Activated CD4-positive, alpha-beta memory T cell treated with anti-CD3 and anti-CD28 coated beads for 36 hours (primary cell): ENCODE measurements at regions of chr12 and their contacts with region 1.

Region 1: GRCh38 chr12:69157023-69157655 is 82.2 kb upstream of the CPSF6 start:
- DNase-seq: peak; percentile 95
- H3K4me3 Mint-ChIP-seq: peak overlapping the region; percentile 52
- H3K27ac Mint-ChIP-seq: no peak overlapping the region
- H3K4me1 Mint-ChIP-seq: peaks cover 39% of the 10 kb centered on the region
- H3K27me3 Mint-ChIP-seq: no peaks in the 10 kb centered on the region

Region 2: GRCh38 chr12:69059483-69060457 is 97.4 kb before region 1 on chr12:
- CTCF ChIA-PET with region 1: no interaction called
- POLR2A ChIA-PET with region 1: no interaction called
- intact Hi-C with region 1: loop called (anchors 5 kb)
- DNase-seq: peak; percentile 35
- H3K4me3 Mint-ChIP-seq: no peak overlapping the region
- H3K27ac Mint-ChIP-seq: peak overlapping the region; percentile 70
- H3K4me1 Mint-ChIP-seq: peaks cover 33% of the 10 kb centered on the region
- H3K27me3 Mint-ChIP-seq: no peaks in the 10 kb centered on the region

Region 3: GRCh38 chr12:69254046-69254445 is 96.9 kb after region 1 on chr12:
- CTCF ChIA-PET with region 1: interaction called, 178 read pairs
- POLR2A ChIA-PET with region 1: interaction called, 9 read pairs
- intact Hi-C with region 1: loop called (anchors 1 kb)
- DNase-seq: no peak
- H3K4me3 Mint-ChIP-seq: no peak overlapping the region
- H3K27ac Mint-ChIP-seq: peak overlapping the region; percentile 67
- H3K4me1 Mint-ChIP-seq: peaks cover 36% of the 10 kb centered on the region
- H3K27me3 Mint-ChIP-seq: no peaks in the 10 kb centered on the region

Region 4: DNA sequence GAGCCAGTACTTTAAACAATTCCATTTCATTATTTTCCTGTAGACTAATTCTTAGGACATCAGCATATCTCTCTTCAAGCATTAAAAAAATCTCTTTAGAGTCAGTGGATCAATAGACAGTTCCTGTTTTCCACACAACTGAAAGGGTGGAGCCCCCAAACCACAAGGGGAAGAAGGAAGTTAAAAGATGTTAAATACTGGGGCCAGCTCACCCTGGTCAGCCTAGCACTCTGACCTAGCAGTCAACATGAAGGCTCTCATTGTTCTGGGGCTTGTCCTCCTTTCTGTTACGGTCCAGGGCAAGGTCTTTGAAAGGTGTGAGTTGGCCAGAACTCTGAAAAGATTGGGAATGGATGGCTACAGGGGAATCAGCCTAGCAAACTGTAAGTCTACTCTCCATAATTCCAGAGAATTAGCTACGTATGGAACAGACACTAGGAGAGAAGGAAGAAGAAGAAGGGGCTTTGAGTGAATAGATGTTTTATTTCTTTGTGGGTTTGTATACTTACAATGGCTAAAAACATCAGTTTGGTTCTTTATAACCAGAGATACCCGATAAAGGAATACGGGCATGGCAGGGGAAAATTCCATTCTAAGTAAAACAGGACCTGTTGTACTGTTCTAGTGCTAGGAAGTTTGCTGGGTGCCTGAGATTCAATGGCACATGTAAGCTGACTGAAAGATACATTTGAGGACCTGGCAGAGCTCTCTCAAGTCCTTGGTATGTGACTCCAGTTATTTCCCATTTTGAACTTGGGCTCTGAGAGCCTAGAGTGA is 191.2 kb after region 1 on chr12 and contains the start of gene LYZ:
- CTCF ChIA-PET with region 1: no interaction called
- POLR2A ChIA-PET with region 1: no interaction called
- intact Hi-C with region 1: no loop called
- DNase-seq: no peak
- H3K4me3 Mint-ChIP-seq: no peak within 1 kb of the TSS
- H3K27ac Mint-ChIP-seq: no peak within 1 kb of the TSS
- H3K4me1 Mint-ChIP-seq: no peaks in the 10 kb centered on the region
- H3K27me3 Mint-ChIP-seq: no peaks in the 10 kb centered on the region
- total RNA-seq, gene LYZ: not detected

Region 5: GRCh38 chr12:69470189-69471075 is 313.3 kb after region 1 on chr12 and contains the start of gene FRS2:
- CTCF ChIA-PET with region 1: no interaction called
- POLR2A ChIA-PET with region 1: no interaction called
- intact Hi-C with region 1: loop called (anchors 5 kb)
- DNase-seq: peak; percentile 92
- H3K4me3 Mint-ChIP-seq: peak within 1 kb of the TSS; percentile 98
- H3K27ac Mint-ChIP-seq: peak within 1 kb of the TSS; percentile 93
- H3K4me1 Mint-ChIP-seq: peaks cover 41% of the 10 kb centered on the region
- H3K27me3 Mint-ChIP-seq: no peaks in the 10 kb centered on the region
- total RNA-seq, gene FRS2: 8.6 to 9.5 TPM

Region 6: DNA sequence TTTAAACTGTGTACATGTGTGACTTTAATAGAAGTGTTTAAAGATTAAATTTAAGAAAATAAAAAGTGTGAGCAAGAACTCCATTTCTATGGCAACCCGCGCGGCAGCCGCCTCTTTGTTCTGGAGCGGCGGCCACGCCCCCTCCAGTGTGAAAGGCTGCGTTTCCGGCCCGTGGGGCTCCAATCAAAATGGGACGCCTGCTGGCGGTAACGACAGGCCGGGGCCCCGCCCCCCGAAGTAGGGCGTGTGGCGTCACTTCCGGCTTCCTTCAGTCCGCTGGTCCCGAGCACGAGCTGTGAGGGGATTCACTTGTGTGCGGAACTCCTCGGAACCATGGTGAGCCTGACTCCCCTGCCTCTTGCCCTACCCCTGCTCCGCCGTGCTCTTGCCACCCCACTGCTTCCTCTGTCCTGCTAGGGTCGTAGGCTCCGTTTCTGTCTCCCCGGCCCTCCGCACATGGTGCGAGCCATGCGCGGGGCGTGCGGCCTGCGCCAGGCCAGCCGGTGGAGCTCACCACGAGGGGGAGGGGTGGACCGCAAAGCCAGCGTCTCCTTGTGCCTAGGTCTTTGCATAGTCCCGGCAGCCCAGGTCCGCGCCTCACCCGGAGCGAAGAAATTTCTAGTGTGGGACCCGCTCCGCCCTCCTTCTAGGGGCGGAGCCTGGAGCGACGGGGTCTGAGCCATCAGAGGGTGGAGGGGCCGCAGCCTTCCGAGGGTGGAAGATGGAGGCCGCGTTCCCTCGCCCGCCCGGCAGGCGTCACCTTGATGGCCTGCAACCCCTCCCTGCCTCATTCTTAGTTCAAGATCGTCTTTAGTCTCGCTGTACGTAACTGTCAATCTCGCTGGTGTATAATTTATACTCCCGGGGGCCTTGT is 428.3 kb after region 1 on chr12 and contains the start of gene CCT2:
- CTCF ChIA-PET with region 1: interaction called, 3 read pairs
- POLR2A ChIA-PET with region 1: no interaction called
- intact Hi-C with region 1: loop called (anchors 1 kb)
- DNase-seq: peak; percentile 97
- H3K4me3 Mint-ChIP-seq: peak within 1 kb of the TSS; percentile 83
- H3K27ac Mint-ChIP-seq: peak within 1 kb of the TSS; percentile 90
- H3K4me1 Mint-ChIP-seq: peaks cover 31% of the 10 kb centered on the region
- H3K27me3 Mint-ChIP-seq: no peaks in the 10 kb centered on the region
- total RNA-seq, gene CCT2: 264 to 267 TPM